ENCODE measurements at regions of chr18 and their contacts with region 1.

Region 1: GRCh38 chr18:21444465-21445023 is 156.0 kb downstream of the ESCO1 start:
- DNase-seq: peak in 1 of 9 experiments; percentile 13
- ATAC-seq: no peak
- H3K4me3 ChIP-seq: no peak overlapping the region
- H3K4me3 Mint-ChIP-seq: no peak overlapping the region
- H3K27ac ChIP-seq: no peak overlapping the region
- H3K27ac Mint-ChIP-seq: no peak overlapping the region
- H3K4me1 ChIP-seq: no peaks in the 10 kb centered on the region
- H3K4me1 Mint-ChIP-seq: no peaks in the 10 kb centered on the region
- H3K27me3 ChIP-seq: peaks cover 0 to 2% of the 10 kb centered on the region in 2 experiments
- H3K27me3 Mint-ChIP-seq: peaks cover 16% of the 10 kb centered on the region
- CTCF ChIP-seq: no peak

Region 2: GRCh38 chr18:21509062-21509461 is 64.5 kb after region 1 on chr18:
- CTCF ChIA-PET with region 1: no interaction called
- POLR2A ChIA-PET with region 1: no interaction called
- intact Hi-C with region 1: loop called in 1 of 2 experiments (anchors 10 kb)
- DNase-seq: no peak
- ATAC-seq: no peak
- H3K4me3 ChIP-seq: no peak overlapping the region
- H3K4me3 Mint-ChIP-seq: no peak overlapping the region
- H3K27ac ChIP-seq: no peak overlapping the region
- H3K27ac Mint-ChIP-seq: no peak overlapping the region
- H3K4me1 ChIP-seq: no peaks in the 10 kb centered on the region
- H3K4me1 Mint-ChIP-seq: no peaks in the 10 kb centered on the region
- H3K27me3 ChIP-seq: no peaks in the 10 kb centered on the region
- H3K27me3 Mint-ChIP-seq: no peaks in the 10 kb centered on the region
- CTCF ChIP-seq: no peak

Region 3: GRCh38 chr18:21612125-21612991 is 167.8 kb after region 1 on chr18 and contains the start of gene SNRPD1:
- CTCF ChIA-PET with region 1: no interaction called
- POLR2A ChIA-PET with region 1: no interaction called
- intact Hi-C with region 1: no loop called
- DNase-seq: peak; percentile 78 to 94 (median 86)
- ATAC-seq: peak; percentile 98
- H3K4me3 ChIP-seq: peak within 1 kb of the TSS; percentile 83 to 94
- H3K4me3 Mint-ChIP-seq: peak within 1 kb of the TSS; percentile 98
- H3K27ac ChIP-seq: peak within 1 kb of the TSS; percentile 84 to 87
- H3K27ac Mint-ChIP-seq: peak within 1 kb of the TSS; percentile 98
- H3K4me1 ChIP-seq: peaks cover 29% of the 10 kb centered on the region
- H3K4me1 Mint-ChIP-seq: peaks cover 44% of the 10 kb centered on the region
- H3K27me3 ChIP-seq: no peaks in the 10 kb centered on the region
- H3K27me3 Mint-ChIP-seq: no peaks in the 10 kb centered on the region
- CTCF ChIP-seq: peak; percentile 94
- total RNA-seq, gene SNRPD1: 34.5 to 41.1 TPM

Measured in CD8-positive, alpha-beta T cell (primary cell).